Right ventricle myocardium inferior (tissue), 1 donor: ENCODE measurements at regions of chr22 and their contacts with region 1.

Region 1: GRCh38 chr22:24175160-24175808 is 6.0 kb upstream of the SUSD2 start:
- DNase-seq: peak; percentile 92
- ATAC-seq: peak; percentile 68

Region 2: DNA sequence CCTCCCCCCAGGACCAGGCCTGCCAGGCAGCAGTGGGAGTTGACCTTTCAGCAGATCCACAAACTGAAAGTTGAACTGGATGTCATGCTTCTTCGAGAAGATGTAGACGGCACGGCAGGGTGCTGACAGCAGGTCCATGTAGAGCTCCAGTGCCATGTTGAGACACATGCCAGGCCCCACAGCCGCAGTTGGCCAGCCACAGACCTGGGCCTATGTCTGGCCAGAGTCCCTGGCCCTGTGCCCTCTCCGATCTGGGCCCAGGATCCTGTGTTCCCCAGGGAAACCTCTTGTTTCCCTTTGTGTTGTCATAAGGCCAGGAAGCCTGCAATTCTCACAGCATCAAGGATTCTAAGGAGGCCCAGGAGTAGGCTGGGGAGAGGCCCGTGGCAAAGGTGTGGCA is 170.1 kb before region 1 on chr22 and contains the start of gene GSTT4:
- intact Hi-C with region 1: loop called (anchors 5 kb)
- DNase-seq: peak; percentile 90
- ATAC-seq: peak; percentile 92
- total RNA-seq, gene GSTT4: not detected

Region 3: GRCh38 chr22:24106385-24107381 is 68.6 kb before region 1 on chr22:
- intact Hi-C with region 1: loop called (anchors 1 kb)
- DNase-seq: no peak
- ATAC-seq: peak; percentile 4

Region 4: GRCh38 chr22:24133187-24133965 is 41.9 kb before region 1 on chr22:
- intact Hi-C with region 1: loop called (anchors 2 kb)
- DNase-seq: no peak
- ATAC-seq: peak; percentile 49